Activated T-helper 1 cell treated with anti-CD3 and anti-CD28 coated beads, Interleukin-12 subunit alpha, Interleukin-12 subunit beta, Interleukin-2, Interleukin-4 antibody, amounts not matched to agents 30 ng/mL and 10 ng/mL and 1 ng/mL, durations not matched to agents 14 hours and 24 hours and 36 hours (primary cell): ENCODE measurements at regions of chr10 and their contacts with region 1.

Region 1: GRCh38 chr10:99620713-99621453 is 644 bp upstream of the SLC25A28 start:
- DNase-seq: peak; percentile 91
- H3K4me3 Mint-ChIP-seq: peak overlapping the region; percentile 80
- H3K27ac Mint-ChIP-seq: peak overlapping the region; percentile 97
- H3K4me1 Mint-ChIP-seq: peaks cover 39% of the 10 kb centered on the region
- H3K27me3 Mint-ChIP-seq: no peaks in the 10 kb centered on the region

Region 2: GRCh38 chr10:98446661-98447221 is 1174.1 kb before region 1 on chr10 and contains the start of gene HPS1:
- intact Hi-C with region 1: loop called (anchors 5 kb)
- DNase-seq: peak; percentile 78
- H3K4me3 Mint-ChIP-seq: peak within 1 kb of the TSS; percentile 92
- H3K27ac Mint-ChIP-seq: peak within 1 kb of the TSS; percentile 80
- H3K4me1 Mint-ChIP-seq: peaks cover 30% of the 10 kb centered on the region
- H3K27me3 Mint-ChIP-seq: peaks cover 18% of the 10 kb centered on the region
- total RNA-seq, gene HPS1: 56.1 and 63.1 TPM in 2 replicates

Region 3: GRCh38 chr10:99631496-99631895 is 10.6 kb after region 1 on chr10:
- intact Hi-C with region 1: no loop called
- DNase-seq: no peak
- H3K4me3 Mint-ChIP-seq: no peak overlapping the region
- H3K27ac Mint-ChIP-seq: no peak overlapping the region
- H3K4me1 Mint-ChIP-seq: no peaks in the 10 kb centered on the region
- H3K27me3 Mint-ChIP-seq: peaks cover 22% of the 10 kb centered on the region

Region 4: GRCh38 chr10:99659031-99659867 is 38.4 kb after region 1 on chr10 and contains the start of gene ENTPD7:
- intact Hi-C with region 1: loop called (anchors 1 kb)
- DNase-seq: peak; percentile 90
- H3K4me3 Mint-ChIP-seq: peak within 1 kb of the TSS; percentile 96
- H3K27ac Mint-ChIP-seq: peak within 1 kb of the TSS; percentile 91
- H3K4me1 Mint-ChIP-seq: peaks cover 17% of the 10 kb centered on the region
- H3K27me3 Mint-ChIP-seq: peaks cover 19% of the 10 kb centered on the region
- total RNA-seq, gene ENTPD7: 11.0 and 11.1 TPM in 2 replicates

Region 5: DNA sequence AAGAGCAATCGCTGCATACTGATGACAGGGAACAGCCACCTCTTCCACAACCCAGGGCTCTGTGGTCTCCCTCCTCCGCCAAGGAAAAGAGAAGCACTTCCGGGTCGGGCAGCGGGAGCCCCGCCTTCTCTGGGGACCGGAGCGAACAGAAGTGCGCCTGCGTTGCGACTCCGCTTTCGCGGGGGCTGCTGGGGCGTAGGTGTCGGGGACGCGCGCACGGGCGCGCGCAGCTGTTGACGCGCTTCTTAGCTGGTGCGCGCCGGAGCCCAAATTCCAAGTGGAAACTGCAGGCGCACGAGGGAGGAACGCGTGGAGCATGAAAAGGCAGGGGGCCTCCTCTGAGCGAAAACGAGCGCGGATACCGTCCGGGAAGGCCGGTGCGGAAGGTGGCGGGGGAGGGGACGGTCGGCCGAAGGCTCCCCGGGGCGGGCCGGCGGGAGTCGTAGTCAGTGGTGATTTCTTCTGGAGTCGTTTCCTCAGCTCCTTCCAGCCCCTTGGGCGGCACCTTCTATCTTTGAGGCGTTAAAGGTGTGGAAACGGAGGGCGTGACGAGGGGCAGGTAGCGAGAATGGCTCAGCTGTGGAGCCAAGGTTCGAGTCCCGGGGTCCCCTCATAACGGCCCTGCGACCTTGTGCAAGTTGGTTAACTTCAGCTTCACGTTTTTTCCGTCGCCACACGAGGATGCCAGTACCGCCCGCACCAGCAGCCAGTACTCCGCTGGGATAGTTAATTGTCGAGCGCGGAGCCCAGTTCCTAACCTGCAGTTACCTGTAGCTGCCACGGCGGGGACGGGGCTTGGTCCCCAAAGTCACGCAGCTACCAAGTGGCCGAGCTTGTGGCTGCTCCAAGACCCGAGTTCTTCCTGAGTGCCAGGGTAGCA is 111.4 kb after region 1 on chr10 and contains the starts of genes COX15 and CUTC:
- intact Hi-C with region 1: loop called (anchors 1 kb)
- DNase-seq: peak; percentile 94
- H3K4me3 Mint-ChIP-seq: peak within 1 kb of the TSS; percentile 98
- H3K27ac Mint-ChIP-seq: peak within 1 kb of the TSS; percentile 99
- H3K4me1 Mint-ChIP-seq: peaks cover 41% of the 10 kb centered on the region
- H3K27me3 Mint-ChIP-seq: no peaks in the 10 kb centered on the region
- total RNA-seq, gene COX15: 36.7 and 38.1 TPM in 2 replicates
- total RNA-seq, gene CUTC: 42.2 and 45.4 TPM in 2 replicates